ENCODE measurements at regions of chr9 and their contacts with region 1.

Region 1: GRCh38 chr9:4382722-4383317 is 83.0 kb upstream of the GLIS3 start:
- DNase-seq: no peak
- ATAC-seq: no peak
- H3K4me3 Mint-ChIP-seq: no peak overlapping the region
- H3K27ac Mint-ChIP-seq: no peak overlapping the region
- H3K4me1 Mint-ChIP-seq: no peaks in the 10 kb centered on the region
- H3K27me3 Mint-ChIP-seq: peaks cover 8% of the 10 kb centered on the region
- CTCF ChIP-seq: no peak

Region 2: GRCh38 chr9:4301971-4302427 is 80.8 kb before region 1 on chr9:
- CTCF ChIA-PET with region 1: no interaction called
- POLR2A ChIA-PET with region 1: no interaction called
- intact Hi-C with region 1: no loop called
- DNase-seq: no peak
- ATAC-seq: no peak
- H3K4me3 Mint-ChIP-seq: no peak overlapping the region
- H3K27ac Mint-ChIP-seq: no peak overlapping the region
- H3K4me1 Mint-ChIP-seq: peaks cover 17% of the 10 kb centered on the region
- H3K27me3 Mint-ChIP-seq: peaks cover 35% of the 10 kb centered on the region
- CTCF ChIP-seq: no peak

Region 3: GRCh38 chr9:4548811-4549725 is 166.2 kb after region 1 on chr9:
- CTCF ChIA-PET with region 1: interaction called, 3 read pairs
- POLR2A ChIA-PET with region 1: no interaction called
- intact Hi-C with region 1: loop called (anchors 1 kb)
- DNase-seq: no peak
- ATAC-seq: peak; percentile 25
- H3K4me3 Mint-ChIP-seq: no peak overlapping the region
- H3K27ac Mint-ChIP-seq: no peak overlapping the region
- H3K4me1 Mint-ChIP-seq: no peaks in the 10 kb centered on the region
- H3K27me3 Mint-ChIP-seq: no peaks in the 10 kb centered on the region
- CTCF ChIP-seq: no peak

Region 4: GRCh38 chr9:4640027-4640426 is 257.2 kb after region 1 on chr9:
- CTCF ChIA-PET with region 1: interaction called, 4 read pairs
- POLR2A ChIA-PET with region 1: no interaction called
- intact Hi-C with region 1: loop called (anchors 1 kb)
- DNase-seq: no peak
- ATAC-seq: no peak
- H3K4me3 Mint-ChIP-seq: no peak overlapping the region
- H3K27ac Mint-ChIP-seq: no peak overlapping the region
- H3K4me1 Mint-ChIP-seq: no peaks in the 10 kb centered on the region
- H3K27me3 Mint-ChIP-seq: peaks cover 4% of the 10 kb centered on the region
- CTCF ChIP-seq: no peak

Region 5: DNA sequence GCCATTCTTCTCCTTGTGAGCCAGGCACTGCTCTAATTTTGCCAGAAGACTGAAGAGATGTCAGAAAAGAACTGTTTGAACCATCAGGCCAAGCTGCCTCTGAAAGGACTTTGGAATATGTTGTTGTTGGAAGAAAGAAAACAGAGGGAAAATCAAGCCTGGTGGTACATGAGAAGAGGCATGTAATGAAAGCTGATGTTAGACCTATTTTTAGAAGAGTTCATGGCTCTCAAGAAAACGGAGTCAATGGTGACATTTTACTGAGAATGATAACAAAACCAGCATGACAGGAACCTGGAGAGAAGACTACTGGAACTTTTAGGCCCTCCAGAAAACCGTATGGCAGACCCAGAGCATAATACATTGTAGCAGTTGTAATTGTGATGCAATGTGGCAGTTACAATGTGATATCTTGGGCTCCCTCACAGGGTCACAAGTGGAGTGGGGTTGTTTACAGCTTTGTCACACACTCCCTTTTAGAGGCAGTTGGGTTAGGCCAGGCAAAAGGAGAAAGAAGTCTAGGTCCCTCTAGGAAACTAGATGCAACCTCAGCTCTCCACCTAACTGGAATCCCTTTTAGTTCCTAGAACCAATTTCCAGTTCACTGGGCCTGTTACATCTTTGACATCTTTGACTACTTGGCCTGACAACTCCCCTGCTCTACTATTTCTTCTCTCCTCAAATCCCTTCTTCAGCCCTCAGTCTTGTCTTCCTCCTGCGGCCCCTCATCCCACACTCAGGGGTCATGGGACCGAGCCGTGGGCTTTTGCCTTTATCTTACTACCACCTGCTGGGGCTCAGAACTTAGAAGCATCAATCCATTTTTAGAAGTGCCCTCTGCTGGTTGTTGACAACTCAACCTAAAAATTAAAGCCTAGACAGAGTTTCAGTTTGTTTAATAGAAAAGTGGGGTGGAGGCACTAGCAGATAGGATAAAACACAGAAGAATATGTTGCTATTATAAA is 541.0 kb after region 1 on chr9:
- CTCF ChIA-PET with region 1: no interaction called
- POLR2A ChIA-PET with region 1: no interaction called
- intact Hi-C with region 1: loop called (anchors 10 kb)
- DNase-seq: no peak
- ATAC-seq: peak; percentile 52
- H3K4me3 Mint-ChIP-seq: no peak overlapping the region
- H3K27ac Mint-ChIP-seq: no peak overlapping the region
- H3K4me1 Mint-ChIP-seq: peaks cover 11% of the 10 kb centered on the region
- H3K27me3 Mint-ChIP-seq: no peaks in the 10 kb centered on the region
- CTCF ChIP-seq: no peak